ENCODE measurements at regions of chr9 and their contacts with region 1.

Region 1: DNA sequence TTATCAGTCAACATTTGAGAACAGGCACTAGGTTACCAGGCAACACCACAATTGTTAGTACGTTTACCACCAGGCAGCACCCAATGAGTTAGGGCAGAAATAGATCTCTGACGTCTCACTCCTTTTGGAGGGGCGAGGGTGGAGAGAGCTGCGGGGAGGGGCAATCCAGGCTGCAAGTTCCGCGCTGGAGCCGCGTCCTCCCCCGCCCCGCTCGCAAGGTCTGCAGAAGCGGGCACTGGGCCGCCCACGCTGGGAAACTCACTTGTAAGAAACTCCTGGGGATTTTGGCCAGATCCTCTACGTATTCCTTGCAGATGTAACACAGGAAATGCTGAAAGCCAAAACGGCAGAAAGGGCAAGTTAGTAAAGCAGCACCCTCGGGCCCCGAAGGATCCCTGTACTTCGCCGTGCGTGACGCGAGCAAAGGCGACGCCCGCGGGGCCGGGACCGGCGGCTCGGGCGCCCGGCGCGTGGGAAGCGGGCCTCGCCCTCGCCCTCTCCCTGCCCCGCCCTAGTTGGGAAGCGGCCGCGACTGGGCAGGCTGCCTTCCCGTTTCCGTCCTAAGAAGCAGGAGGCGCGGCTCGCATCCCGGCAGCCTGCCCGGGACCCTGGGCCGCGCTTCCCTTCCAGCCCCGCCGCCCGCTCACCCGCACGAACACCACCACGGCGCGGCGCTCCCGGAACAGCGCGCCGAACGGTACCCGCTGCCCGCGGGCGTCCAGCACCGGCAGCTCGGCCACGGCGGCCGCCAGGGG is 497 bp downstream of the PRXL2C start:
- DNase-seq: peak; percentile 58
- ATAC-seq: peak; percentile 64
- H3K4me3 Mint-ChIP-seq: peak overlapping the region; percentile 88
- H3K27ac Mint-ChIP-seq: peak overlapping the region; percentile 86
- H3K4me1 Mint-ChIP-seq: peaks cover 17% of the 10 kb centered on the region
- H3K27me3 Mint-ChIP-seq: no peaks in the 10 kb centered on the region
- CTCF ChIP-seq: no peak

Region 2: DNA sequence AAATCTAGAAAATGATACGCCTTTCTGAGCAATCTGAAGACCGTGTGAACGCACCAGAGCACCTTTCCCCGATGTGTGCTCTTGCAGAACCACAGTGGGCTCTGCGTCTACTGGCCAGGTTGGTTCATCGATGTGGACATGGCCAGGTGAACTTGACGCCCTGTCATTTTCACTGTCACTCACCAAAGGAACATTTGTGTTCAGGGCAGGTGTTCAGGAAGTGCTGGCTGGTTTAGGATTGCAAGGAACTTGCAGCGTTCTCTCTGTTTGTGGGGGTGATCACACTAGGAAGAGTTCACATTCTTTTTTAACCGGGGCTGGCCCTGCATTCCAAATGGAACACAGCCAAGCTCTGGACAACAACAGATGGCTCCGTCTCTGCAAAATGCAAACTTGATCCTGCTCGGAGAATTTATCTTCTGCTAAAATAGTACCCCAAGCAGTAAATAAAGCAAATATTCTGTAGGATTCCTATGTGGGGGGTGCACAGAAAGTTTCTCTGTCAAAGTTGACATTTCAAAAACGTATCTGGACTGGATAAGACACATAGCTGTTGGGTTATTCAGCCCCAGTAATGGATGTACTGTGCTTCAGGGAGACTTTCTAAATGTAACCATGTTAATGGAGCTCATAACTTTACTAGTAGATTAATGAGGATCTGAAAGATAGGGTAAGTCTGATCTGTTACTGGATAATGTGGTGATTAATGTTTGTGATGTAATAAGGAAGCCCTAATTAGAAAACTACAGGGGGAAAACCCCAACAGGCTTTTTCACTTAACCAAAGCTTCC is 1291.4 kb before region 1 on chr9:
- CTCF ChIA-PET with region 1: no interaction called
- POLR2A ChIA-PET with region 1: no interaction called
- intact Hi-C with region 1: no loop called
- DNase-seq: no peak
- ATAC-seq: no peak
- H3K4me3 Mint-ChIP-seq: no peak overlapping the region
- H3K27ac Mint-ChIP-seq: no peak overlapping the region
- H3K4me1 Mint-ChIP-seq: no peaks in the 10 kb centered on the region
- H3K27me3 Mint-ChIP-seq: peaks cover 26% of the 10 kb centered on the region
- CTCF ChIP-seq: no peak

Region 3: DNA sequence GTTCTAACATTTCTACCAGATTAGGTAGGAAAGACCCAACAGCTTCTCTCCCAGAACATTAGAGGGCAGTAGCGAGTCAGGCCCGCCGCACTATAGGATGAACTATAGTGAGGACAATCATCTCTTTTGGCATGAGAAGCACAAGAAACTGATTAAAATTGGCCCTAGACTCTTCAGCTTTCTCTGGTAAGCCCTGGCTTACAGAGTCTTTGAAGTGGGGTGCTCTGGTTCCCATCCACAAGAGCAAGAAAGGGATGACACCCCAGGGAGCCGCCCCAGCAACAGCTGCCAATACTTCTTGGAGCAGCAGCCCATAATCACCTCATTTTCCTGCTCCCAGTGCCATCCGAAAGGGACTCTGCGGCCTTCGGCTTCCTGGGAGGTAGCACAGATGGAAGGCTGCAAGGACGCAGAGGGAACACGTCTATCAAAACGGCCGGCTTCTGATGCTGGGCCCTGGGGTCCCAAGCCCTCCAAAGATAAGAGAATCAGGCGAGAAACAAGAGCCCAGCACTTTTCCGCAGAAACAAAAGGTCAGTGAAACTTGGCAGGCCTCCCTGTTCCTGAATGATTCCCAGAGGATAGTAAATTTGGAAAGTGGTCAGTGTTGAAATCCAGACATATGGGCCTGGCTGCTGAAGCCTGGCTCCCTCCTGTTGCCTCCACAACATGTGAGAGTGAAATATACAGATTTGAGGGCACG is 421.9 kb before region 1 on chr9:
- CTCF ChIA-PET with region 1: no interaction called
- POLR2A ChIA-PET with region 1: no interaction called
- intact Hi-C with region 1: loop called (anchors 5 kb)
- DNase-seq: no peak
- ATAC-seq: peak; percentile 57
- H3K4me3 Mint-ChIP-seq: no peak overlapping the region
- H3K27ac Mint-ChIP-seq: no peak overlapping the region
- H3K4me1 Mint-ChIP-seq: no peaks in the 10 kb centered on the region
- H3K27me3 Mint-ChIP-seq: peaks cover 21% of the 10 kb centered on the region
- CTCF ChIP-seq: no peak

Region 4: DNA sequence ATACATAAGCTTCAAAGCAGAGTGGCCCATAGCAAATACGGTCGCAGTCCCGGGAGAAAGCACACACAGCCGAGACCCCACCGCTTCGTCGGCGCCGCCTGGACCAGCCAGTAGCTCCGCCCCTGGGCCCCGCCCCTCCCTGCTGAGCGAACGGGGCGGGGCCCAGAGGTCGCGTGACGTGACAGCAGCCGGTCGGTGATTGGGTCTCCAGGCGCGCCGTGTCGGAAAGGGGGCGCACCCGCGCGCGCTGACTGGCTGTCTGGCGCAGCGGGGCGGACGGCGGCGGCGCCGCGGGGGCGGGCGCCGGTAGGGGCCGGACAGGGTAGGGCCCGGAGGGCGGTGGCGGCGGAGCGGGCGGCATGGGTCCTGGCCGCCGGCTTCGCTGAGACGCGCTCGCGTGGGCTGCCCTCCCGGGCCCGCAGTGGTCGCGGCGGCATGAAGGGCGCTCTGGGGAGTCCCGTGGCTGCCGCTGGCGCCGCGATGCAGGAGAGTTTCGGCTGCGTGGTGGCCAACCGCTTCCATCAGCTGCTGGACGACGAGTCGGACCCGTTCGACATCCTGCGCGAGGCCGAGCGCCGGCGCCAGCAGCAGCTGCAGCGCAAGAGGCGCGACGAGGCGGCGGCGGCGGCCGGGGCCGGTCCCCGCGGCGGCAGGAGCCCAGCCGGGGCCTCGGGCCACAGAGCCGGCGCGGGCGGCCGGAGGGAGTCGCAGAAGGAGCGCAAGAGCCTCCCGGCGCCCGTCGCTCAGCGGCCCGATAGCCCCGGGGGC is 204.6 kb before region 1 on chr9 and contains the start of gene HABP4:
- CTCF ChIA-PET with region 1: no interaction called
- POLR2A ChIA-PET with region 1: interaction called, 6 read pairs
- intact Hi-C with region 1: loop called (anchors 10 kb)
- DNase-seq: peak; percentile 97
- ATAC-seq: peak; percentile 96
- H3K4me3 Mint-ChIP-seq: peak within 1 kb of the TSS; percentile 87
- H3K27ac Mint-ChIP-seq: peak within 1 kb of the TSS; percentile 71
- H3K4me1 Mint-ChIP-seq: peaks cover 11% of the 10 kb centered on the region
- H3K27me3 Mint-ChIP-seq: peaks cover 3% of the 10 kb centered on the region
- CTCF ChIP-seq: no peak
- total RNA-seq, gene HABP4: 8.1 TPM in 2 replicates

Region 5: DNA sequence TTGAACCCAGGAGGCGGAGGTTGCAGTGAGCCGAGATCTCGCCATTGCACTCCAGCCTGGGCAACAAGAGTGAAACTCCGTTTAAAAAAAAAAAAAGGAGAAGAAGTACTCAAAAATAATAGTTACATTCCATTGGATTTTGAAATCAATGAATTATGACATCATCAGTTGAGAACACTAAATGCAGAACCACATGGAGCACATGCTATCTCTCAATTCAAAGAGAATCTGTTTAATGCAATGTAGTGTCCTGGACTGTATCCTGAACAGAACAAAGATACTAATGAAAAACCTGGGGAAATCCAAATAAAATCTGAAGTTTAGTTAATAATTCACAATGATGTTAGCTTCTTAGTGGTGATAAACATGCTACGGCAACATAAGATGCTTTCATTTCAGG is 55.3 kb before region 1 on chr9:
- CTCF ChIA-PET with region 1: no interaction called
- POLR2A ChIA-PET with region 1: no interaction called
- intact Hi-C with region 1: no loop called
- DNase-seq: no peak
- ATAC-seq: no peak
- H3K4me3 Mint-ChIP-seq: no peak overlapping the region
- H3K27ac Mint-ChIP-seq: no peak overlapping the region
- H3K4me1 Mint-ChIP-seq: no peaks in the 10 kb centered on the region
- H3K27me3 Mint-ChIP-seq: peaks cover 5% of the 10 kb centered on the region
- CTCF ChIP-seq: no peak

Region 6: DNA sequence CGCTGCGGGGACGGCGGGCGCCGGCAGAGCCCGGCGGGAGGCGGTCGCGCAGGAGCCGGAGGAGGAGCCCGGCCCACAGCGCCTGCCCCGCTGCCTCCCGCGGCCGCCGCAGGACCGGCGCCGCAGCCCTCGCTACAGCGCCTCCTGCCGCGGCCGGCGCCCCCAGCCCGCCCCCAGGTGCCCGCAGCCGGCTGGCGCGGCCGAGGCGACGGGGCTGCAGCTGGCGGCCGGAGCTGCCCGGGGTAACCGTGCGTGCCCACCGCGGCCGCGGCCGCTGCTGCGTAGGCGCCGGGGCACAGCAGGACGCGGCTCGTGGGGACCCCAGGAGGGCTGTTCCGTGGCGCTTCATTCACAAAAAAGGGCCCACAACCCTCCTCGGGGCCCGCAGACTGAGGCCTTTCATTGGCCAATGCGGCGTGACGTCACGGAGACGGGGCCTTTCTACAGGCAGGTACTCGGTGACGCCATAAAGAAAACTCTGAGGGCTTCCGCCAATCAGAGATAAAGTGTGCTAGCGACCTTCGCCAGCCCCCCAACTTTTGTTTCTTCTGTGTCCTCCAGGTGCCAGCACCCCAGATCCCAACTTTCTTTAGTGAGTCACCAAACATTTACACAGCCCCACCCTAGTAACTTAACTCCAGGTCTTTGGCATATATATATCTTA is 35.0 kb before region 1 on chr9 and contains the start of gene CDC14B:
- CTCF ChIA-PET with region 1: no interaction called
- POLR2A ChIA-PET with region 1: no interaction called
- intact Hi-C with region 1: loop called (anchors 5 kb)
- DNase-seq: peak; percentile 45
- ATAC-seq: peak; percentile 87
- H3K4me3 Mint-ChIP-seq: peak within 1 kb of the TSS; percentile 72
- H3K27ac Mint-ChIP-seq: no peak within 1 kb of the TSS
- H3K4me1 Mint-ChIP-seq: peaks cover 11% of the 10 kb centered on the region
- H3K27me3 Mint-ChIP-seq: peaks cover 53% of the 10 kb centered on the region
- CTCF ChIP-seq: no peak
- total RNA-seq, gene CDC14B: 1.3 and 2.5 TPM in 2 replicates

Region 7: GRCh38 chr9:96738147-96739027 is 83.8 kb after region 1 on chr9:
- CTCF ChIA-PET with region 1: no interaction called
- POLR2A ChIA-PET with region 1: no interaction called
- intact Hi-C with region 1: no loop called
- DNase-seq: no peak
- ATAC-seq: no peak
- H3K4me3 Mint-ChIP-seq: no peak overlapping the region
- H3K27ac Mint-ChIP-seq: no peak overlapping the region
- H3K4me1 Mint-ChIP-seq: no peaks in the 10 kb centered on the region
- H3K27me3 Mint-ChIP-seq: no peaks in the 10 kb centered on the region
- CTCF ChIP-seq: no peak

Region 8: DNA sequence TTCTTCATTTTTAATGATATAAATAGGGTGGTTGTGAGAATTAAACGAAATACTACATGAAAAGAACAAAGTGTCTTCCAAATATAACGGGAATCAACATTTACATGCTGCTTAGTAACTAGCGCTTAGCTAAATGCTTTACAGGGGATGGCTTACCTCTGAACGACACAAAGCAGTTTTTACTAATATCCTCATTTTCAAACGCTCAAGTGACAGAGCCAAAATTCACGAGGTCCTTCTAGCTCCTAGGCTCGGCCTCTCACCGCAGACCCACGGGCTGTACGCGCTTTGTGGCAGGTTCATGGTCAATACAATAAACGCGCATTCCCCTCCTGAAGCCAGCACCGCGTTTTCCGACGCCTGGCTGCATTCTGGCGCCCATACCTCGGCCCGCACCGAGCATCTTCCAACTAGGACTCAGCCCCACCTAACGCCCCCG is 122.8 kb after region 1 on chr9:
- CTCF ChIA-PET with region 1: no interaction called
- POLR2A ChIA-PET with region 1: no interaction called
- intact Hi-C with region 1: loop called (anchors 2 kb)
- DNase-seq: no peak
- ATAC-seq: no peak
- H3K4me3 Mint-ChIP-seq: peak overlapping the region; percentile 99
- H3K27ac Mint-ChIP-seq: peak overlapping the region; percentile 96
- H3K4me1 Mint-ChIP-seq: peaks cover 25% of the 10 kb centered on the region
- H3K27me3 Mint-ChIP-seq: no peaks in the 10 kb centered on the region
- CTCF ChIP-seq: no peak

Region 9: GRCh38 chr9:97046223-97046622 is 391.6 kb after region 1 on chr9:
- CTCF ChIA-PET with region 1: no interaction called
- POLR2A ChIA-PET with region 1: no interaction called
- intact Hi-C with region 1: no loop called
- DNase-seq: no peak
- ATAC-seq: no peak
- H3K4me3 Mint-ChIP-seq: no peak overlapping the region
- H3K27ac Mint-ChIP-seq: no peak overlapping the region
- H3K4me1 Mint-ChIP-seq: no peaks in the 10 kb centered on the region
- H3K27me3 Mint-ChIP-seq: peaks cover 40% of the 10 kb centered on the region
- CTCF ChIP-seq: no peak